ENCODE measurements at regions of chr2 and their contacts with region 1.

Region 1: DNA sequence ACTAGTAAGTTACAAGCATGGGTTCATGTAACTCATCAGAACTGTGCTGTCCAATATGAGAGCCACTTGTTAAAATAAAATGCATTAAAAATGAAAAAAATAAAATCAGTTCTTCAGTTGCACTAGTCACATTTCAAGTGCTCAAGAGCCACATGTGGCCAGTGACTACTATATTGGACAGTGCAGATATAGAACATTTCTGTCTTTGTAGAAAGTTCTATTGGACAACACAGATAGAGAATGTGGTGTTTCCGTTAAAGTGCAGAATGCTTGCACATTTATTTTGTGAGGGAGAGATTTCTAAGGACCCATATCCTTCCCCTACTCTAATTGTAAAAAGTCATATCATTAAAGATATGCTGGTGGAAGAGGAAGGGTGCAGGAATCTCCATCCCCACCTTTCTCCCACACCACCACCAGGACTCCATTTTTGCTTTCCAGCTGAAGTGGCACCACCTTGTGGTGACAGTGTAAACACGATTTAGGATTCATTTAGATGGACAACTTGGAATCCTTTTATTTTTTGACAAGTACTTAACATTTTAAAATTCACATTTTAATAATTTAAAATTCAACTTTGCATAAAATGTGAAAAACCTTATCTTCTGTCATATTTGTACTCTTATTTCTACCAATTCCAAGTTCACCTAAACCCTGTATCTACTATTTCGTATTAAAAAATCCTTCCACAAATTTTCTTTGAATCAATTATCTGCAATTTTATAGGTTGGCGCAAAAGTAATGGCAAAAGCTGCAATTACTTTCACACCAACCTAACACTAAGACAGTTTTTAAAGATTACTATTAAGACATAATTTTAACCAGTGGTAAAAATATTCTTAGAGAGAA is 9.4 kb upstream of the CD302 start:
- DNase-seq: peak; percentile 76
- ATAC-seq: peak; percentile 96
- H3K4me3 ChIP-seq: no peak overlapping the region
- H3K27ac ChIP-seq: no peak overlapping the region
- H3K4me1 ChIP-seq: no peaks in the 10 kb centered on the region
- H3K27me3 ChIP-seq: no peaks in the 10 kb centered on the region; a peak in 1 of 5 replicates
- CTCF ChIP-seq: peak; percentile 82
- EP300 ChIP-seq: no peak
- POLR2A ChIP-seq: no peak
- RAD21 ChIP-seq: peak; percentile 56

Region 2: DNA sequence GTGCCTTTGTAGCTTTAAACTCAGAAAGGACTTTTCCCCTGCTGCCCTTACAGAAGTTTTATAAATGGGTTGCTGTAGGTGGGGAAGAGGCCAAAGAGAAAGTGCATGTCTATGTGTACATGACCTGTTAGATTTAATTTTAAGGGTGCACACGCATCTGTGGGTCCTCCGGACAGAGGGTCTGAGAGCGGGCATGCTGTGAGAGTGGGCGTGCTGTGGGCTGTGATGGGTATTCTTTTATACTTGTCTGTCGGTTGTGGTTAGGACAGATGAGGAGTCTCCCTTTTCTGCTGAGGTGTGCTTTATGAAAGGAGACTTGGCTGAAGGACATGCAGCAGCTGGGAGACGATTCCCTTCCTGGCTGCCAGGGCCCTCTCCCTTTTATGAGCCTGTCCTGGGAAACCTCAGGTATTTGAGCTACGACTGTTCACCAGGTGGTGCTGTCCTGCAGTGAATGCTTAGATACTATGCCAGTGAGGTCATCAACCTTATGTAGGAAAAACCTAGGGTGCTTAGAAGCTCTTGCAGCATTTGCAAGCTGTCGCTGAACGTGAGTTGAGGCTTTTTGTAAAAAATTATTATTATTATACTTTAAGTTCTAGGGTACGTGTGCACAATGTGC is 771.5 kb before region 1 on chr2:
- CTCF ChIA-PET with region 1: interaction called, 3 read pairs
- POLR2A ChIA-PET with region 1: no interaction called
- in situ Hi-C with region 1: no loop called
- intact Hi-C with region 1: loop called (anchors 5 kb)
- DNase-seq: peak; percentile 83
- ATAC-seq: peak; percentile 100
- H3K4me3 ChIP-seq: no peak overlapping the region
- H3K27ac ChIP-seq: no peak overlapping the region
- H3K4me1 ChIP-seq: peaks cover 14% of the 10 kb centered on the region
- H3K27me3 ChIP-seq: no peaks in the 10 kb centered on the region
- CTCF ChIP-seq: peak; percentile 86
- EP300 ChIP-seq: no peak
- POLR2A ChIP-seq: no peak
- RAD21 ChIP-seq: peak; percentile 84

Region 3: GRCh38 chr2:159286709-159287441 is 520.5 kb before region 1 on chr2:
- CTCF ChIA-PET with region 1: no interaction called
- POLR2A ChIA-PET with region 1: no interaction called
- in situ Hi-C with region 1: no loop called
- intact Hi-C with region 1: loop called (anchors 5 kb)
- DNase-seq: peak; percentile 97
- ATAC-seq: peak; percentile 91
- H3K4me3 ChIP-seq: peak overlapping the region; percentile 67 to 93 (median 73)
- H3K27ac ChIP-seq: peak overlapping the region; percentile 96
- H3K4me1 ChIP-seq: peaks cover 39% of the 10 kb centered on the region
- H3K27me3 ChIP-seq: no peaks in the 10 kb centered on the region; a peak in 1 of 5 replicates
- CTCF ChIP-seq: peak; percentile 34; the same call in 1 of the 2 replicates
- EP300 ChIP-seq: peak in 1 of 2 experiments; percentile 8; a peak in 1 of 4 replicates
- POLR2A ChIP-seq: peak; percentile 92 to 96
- RAD21 ChIP-seq: peak; percentile 49; the same call in 1 of the 2 replicates

Region 4: DNA sequence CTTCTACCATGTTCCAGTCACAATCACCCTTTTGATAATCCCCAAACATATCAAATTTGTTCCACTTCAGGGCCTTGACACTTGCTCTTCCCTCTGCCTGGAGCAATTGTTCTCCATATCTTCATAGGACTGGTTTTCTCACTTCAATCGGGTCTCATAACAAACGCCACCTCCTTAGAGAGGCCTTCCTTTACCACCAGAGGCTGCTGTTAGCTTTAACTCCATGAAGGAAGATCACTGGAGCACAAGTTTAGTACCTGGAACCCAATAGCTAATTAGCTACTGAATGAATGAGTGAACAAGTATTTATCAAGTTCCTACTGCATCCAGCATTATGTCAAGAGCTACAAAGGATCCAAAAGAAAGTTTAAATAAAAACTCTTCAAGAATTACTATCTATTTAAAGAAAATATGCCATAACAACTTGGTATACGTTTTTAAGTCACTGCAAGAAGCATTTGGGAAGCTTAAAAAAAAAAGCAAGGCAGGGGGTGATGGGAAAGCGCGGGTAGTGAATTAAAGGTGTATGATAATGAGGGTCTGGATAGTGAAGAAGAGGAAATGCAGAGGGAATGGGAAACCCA is 249.9 kb before region 1 on chr2:
- CTCF ChIA-PET with region 1: no interaction called
- POLR2A ChIA-PET with region 1: no interaction called
- in situ Hi-C with region 1: no loop called
- intact Hi-C with region 1: loop called (anchors 2 kb)
- DNase-seq: peak; percentile 42
- ATAC-seq: peak; percentile 88
- H3K4me3 ChIP-seq: no peak overlapping the region
- H3K27ac ChIP-seq: no peak overlapping the region
- H3K4me1 ChIP-seq: no peaks in the 10 kb centered on the region
- H3K27me3 ChIP-seq: no peaks in the 10 kb centered on the region
- CTCF ChIP-seq: peak; percentile 66
- EP300 ChIP-seq: no peak
- POLR2A ChIP-seq: no peak
- RAD21 ChIP-seq: peak; percentile 57

Region 5: GRCh38 chr2:159755788-159756187 is 51.6 kb before region 1 on chr2:
- CTCF ChIA-PET with region 1: interaction called, 11 read pairs
- POLR2A ChIA-PET with region 1: no interaction called
- in situ Hi-C with region 1: no loop called
- intact Hi-C with region 1: loop called (anchors 1 kb)
- DNase-seq: peak; percentile 51
- ATAC-seq: peak; percentile 94
- H3K4me3 ChIP-seq: no peak overlapping the region
- H3K27ac ChIP-seq: no peak overlapping the region
- H3K4me1 ChIP-seq: no peaks in the 10 kb centered on the region
- H3K27me3 ChIP-seq: no peaks in the 10 kb centered on the region
- CTCF ChIP-seq: peak; percentile 63
- EP300 ChIP-seq: no peak
- POLR2A ChIP-seq: no peak
- RAD21 ChIP-seq: peak; percentile 50

Region 6: GRCh38 chr2:159921752-159922404 is 114.5 kb after region 1 on chr2:
- CTCF ChIA-PET with region 1: interaction called, 6 read pairs
- POLR2A ChIA-PET with region 1: no interaction called
- in situ Hi-C with region 1: no loop called
- intact Hi-C with region 1: loop called (anchors 5 kb)
- DNase-seq: peak; percentile 61
- ATAC-seq: peak; percentile 99
- H3K4me3 ChIP-seq: no peak overlapping the region
- H3K27ac ChIP-seq: no peak overlapping the region
- H3K4me1 ChIP-seq: peaks cover 15% of the 10 kb centered on the region
- H3K27me3 ChIP-seq: peaks cover 4% of the 10 kb centered on the region in 2 experiments; a peak in 4 of 5 replicates
- CTCF ChIP-seq: peak; percentile 98
- EP300 ChIP-seq: no peak
- POLR2A ChIP-seq: no peak
- RAD21 ChIP-seq: peak; percentile 90

Region 7: DNA sequence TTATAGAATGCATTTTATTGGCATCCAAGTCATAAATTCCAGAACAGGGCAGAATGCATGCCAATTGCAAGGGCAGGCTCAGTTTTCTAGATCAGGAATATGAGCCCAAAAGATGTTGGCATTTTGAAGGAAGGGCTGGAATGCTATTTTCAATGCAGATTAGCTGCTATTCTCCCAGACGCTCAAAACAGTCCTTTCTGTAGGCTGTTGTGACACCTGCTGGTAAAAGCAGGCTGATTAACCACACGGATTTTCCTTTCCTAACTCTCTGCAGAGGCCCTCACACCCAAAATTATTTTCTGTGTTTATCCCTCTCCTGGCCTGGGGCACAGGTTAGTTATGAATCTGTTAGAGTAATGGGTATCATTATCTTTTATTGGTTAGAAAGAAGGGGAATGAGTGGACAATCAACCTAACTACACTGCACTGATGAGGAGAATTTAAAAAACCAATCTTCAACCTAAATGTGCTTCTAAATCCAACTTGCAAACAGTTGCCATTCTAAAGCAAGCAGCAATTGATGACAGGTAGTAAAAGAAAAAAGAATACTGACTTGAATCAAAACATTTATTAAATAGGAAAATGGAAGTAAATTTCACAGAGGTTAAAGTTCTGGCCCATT is 161.0 kb after region 1 on chr2:
- CTCF ChIA-PET with region 1: no interaction called
- POLR2A ChIA-PET with region 1: no interaction called
- in situ Hi-C with region 1: no loop called
- intact Hi-C with region 1: loop called (anchors 1 kb)
- DNase-seq: peak; percentile 31
- ATAC-seq: peak; percentile 89
- H3K4me3 ChIP-seq: no peak overlapping the region
- H3K27ac ChIP-seq: no peak overlapping the region
- H3K4me1 ChIP-seq: no peaks in the 10 kb centered on the region
- H3K27me3 ChIP-seq: no peaks in the 10 kb centered on the region
- CTCF ChIP-seq: peak; percentile 75
- EP300 ChIP-seq: no peak
- POLR2A ChIP-seq: no peak
- RAD21 ChIP-seq: peak; percentile 52; the same call in 1 of the 2 replicates